Mammary epithelial cell (primary cell): ENCODE measurements at regions of chr22 and their contacts with region 1.

Region 1: DNA sequence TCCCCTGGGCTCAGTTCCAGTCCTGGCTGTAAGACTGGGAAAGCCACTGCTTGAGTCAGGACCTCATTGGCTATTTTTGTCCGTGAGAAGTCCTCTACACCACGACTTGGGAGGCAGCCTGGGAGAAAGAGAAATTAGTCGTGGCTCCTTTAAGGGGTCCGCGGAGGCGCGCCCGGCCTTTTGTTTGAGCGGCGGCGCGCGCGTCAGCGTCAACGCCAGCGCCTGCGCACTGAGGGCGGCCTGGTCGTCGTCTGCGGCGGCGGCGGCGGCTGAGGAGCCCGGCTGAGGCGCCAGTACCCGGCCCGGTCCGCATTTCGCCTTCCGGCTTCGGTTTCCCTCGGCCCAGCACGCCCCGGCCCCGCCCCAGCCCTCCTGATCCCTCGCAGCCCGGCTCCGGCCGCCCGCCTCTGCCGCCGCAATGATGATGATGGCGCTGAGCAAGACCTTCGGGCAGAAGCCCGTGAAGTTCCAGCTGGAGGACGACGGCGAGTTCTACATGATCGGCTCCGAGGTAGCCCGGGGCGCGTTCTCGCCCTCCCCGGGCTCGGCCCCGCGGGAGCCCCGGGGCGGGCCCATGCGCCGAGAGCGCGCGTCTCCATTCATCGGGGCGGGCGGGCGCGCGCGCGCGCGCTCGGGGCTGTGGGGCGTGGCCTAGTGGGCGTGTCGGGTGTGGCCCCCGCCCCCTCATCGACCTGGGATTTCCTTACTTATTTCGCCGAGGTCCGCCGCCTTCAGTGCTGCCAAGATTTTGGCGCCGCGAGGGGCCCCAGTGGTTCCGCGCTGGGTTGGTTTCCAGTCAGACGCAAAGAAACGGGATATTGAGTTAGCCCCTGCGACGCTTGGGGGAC is at the start of gene SMARCB1:
- DNase-seq: peak; percentile 86
- H3K4me3 ChIP-seq: peak within 1 kb of the TSS; percentile 51 to 91 (median 67)
- H3K27ac ChIP-seq: peak within 1 kb of the TSS; percentile 88
- H3K4me1 ChIP-seq: peaks cover 26% of the 10 kb centered on the region
- H3K27me3 ChIP-seq: no peaks in the 10 kb centered on the region
- CTCF ChIP-seq: no peak
- total RNA-seq, gene SMARCB1: 63.5 to 93.8 TPM

Region 2: DNA sequence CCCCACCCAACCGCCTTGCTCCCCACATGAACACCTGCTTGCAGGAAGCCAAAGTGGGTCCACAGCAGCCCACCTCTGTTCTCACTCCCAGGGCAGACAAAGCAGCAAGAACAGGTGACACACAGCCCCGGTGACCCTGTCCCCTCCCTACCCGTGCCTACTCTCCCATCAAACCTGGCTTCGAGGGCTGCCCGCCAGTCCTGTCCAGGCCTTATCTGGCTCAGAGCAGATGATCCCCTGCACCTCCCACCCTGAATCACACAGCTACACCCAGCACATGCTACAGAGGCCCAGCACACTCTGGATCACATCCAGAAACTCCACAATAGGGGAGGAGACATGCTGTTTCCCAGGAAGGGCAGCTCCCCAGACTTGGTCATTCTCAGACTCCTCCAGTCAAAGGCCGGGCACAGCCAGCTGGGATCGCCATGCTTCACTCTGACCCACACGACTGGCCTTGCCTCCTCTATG is 102.4 kb before region 1 on chr22:
- CTCF ChIA-PET with region 1: no interaction called
- dilution Hi-C with region 1: loop called (anchors 5 kb)
- in situ Hi-C with region 1: no loop called
- intact Hi-C with region 1: no loop called
- DNase-seq: no peak
- H3K4me3 ChIP-seq: no peak overlapping the region
- H3K27ac ChIP-seq: no peak overlapping the region
- H3K4me1 ChIP-seq: no peaks in the 10 kb centered on the region
- H3K27me3 ChIP-seq: no peaks in the 10 kb centered on the region
- CTCF ChIP-seq: no peak